Endothelial cell of umbilical vein (primary cell): ENCODE measurements at regions of chr4 and their contacts with region 1.

Region 1: GRCh38 chr4:173181769-173182354 is 13.3 kb downstream of the GALNT7 start:
- DNase-seq: peak; percentile 88
- H3K4me3 ChIP-seq: no peak overlapping the region
- H3K27ac ChIP-seq: peak overlapping the region; percentile 74
- H3K4me1 ChIP-seq: peaks cover 46% of the 10 kb centered on the region
- H3K27me3 ChIP-seq: no peaks in the 10 kb centered on the region
- CTCF ChIP-seq: no peak
- POLR2A ChIP-seq: no peak

Region 2: GRCh38 chr4:173138624-173139023 is 43.2 kb before region 1 on chr4:
- CTCF ChIA-PET with region 1: no interaction called
- POLR2A ChIA-PET with region 1: no interaction called
- dilution Hi-C with region 1: no loop called
- intact Hi-C with region 1: no loop called
- DNase-seq: no peak
- H3K4me3 ChIP-seq: no peak overlapping the region
- H3K27ac ChIP-seq: no peak overlapping the region
- H3K4me1 ChIP-seq: no peaks in the 10 kb centered on the region
- H3K27me3 ChIP-seq: no peaks in the 10 kb centered on the region
- CTCF ChIP-seq: no peak
- POLR2A ChIP-seq: no peak

Region 3: DNA sequence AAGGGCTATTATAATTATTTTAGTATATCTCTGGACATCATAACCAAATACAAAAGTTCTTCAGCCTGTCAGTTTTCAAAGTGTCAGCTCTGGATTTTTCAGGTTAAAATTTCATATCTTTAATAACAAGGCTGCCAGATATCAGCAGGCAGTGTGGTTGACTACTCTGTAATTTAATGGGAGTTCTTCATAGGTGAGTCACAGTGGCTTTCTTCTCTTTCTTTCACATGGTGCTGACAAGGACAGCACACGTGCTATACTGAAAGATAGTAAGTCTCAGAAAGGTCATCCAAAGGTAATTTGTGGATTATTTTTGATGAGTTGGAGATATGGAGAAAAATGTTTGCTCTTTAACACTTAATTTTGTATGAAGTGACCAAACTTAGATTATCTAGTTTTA is 30.0 kb after region 1 on chr4:
- CTCF ChIA-PET with region 1: interaction called, 3 read pairs
- POLR2A ChIA-PET with region 1: no interaction called
- dilution Hi-C with region 1: no loop called
- intact Hi-C with region 1: loop called (anchors 1 kb)
- DNase-seq: peak; percentile 53
- H3K4me3 ChIP-seq: no peak overlapping the region
- H3K27ac ChIP-seq: no peak overlapping the region
- H3K4me1 ChIP-seq: peaks cover 24% of the 10 kb centered on the region
- H3K27me3 ChIP-seq: no peaks in the 10 kb centered on the region
- CTCF ChIP-seq: no peak
- POLR2A ChIP-seq: no peak